OCI-LY7 (cell line): ENCODE measurements at regions of chr4 and their contacts with region 1.

Region 1: DNA sequence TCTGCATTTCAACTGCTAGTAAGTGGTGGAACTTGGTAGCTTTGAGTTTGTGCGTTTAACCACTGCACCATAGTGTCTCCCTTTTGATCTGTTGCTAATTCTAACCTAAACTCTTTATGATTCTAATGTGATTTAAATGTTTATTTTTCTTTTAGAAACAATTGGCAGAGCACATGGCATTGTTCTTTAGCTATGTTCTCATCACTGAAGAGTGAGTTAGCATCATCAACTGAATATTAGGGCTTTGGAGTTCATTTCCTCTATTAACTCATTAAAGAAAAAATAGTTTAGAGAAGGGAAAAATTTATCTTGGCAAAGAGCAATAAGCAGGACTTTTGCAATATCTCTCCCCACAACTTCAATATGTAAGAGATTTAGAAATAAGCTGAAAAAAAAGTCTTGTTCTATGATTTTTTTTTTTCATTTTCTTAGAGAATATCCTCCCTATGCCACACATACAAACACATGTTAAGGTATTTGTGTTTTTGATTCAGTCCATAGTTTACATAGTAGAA is 25.7 kb downstream of the CPEB2 start:
- DNase-seq: no peak
- H3K4me3 ChIP-seq: no peak overlapping the region
- H3K27ac ChIP-seq: no peak overlapping the region
- H3K4me1 ChIP-seq: no peaks in the 10 kb centered on the region
- CTCF ChIP-seq: no peak

Region 2: DNA sequence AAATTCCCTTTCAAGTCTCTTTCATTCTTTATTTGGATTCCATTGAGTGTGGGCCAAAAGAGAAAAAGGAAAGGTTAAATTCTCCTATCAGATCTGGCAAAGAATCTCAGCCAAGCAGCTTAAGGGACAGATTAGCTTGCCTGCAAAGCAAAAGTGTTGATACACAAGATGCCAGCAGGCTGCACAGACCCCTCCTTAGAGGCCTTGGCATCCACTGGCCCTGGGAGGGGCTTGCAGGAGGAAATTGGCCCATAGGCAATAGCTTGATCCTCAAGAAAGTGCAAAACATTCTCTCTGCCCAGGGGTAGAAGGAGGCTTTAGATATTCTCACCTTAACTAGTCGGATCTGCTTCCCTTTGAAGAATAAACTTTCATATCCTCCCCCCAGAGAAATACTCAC is 326.1 kb before region 1 on chr4:
- CTCF ChIA-PET with region 1: no interaction called
- POLR2A ChIA-PET with region 1: no interaction called
- intact Hi-C with region 1: no loop called
- DNase-seq: no peak
- H3K4me3 ChIP-seq: no peak overlapping the region
- H3K27ac ChIP-seq: no peak overlapping the region
- H3K4me1 ChIP-seq: no peaks in the 10 kb centered on the region
- CTCF ChIP-seq: no peak

Region 3: DNA sequence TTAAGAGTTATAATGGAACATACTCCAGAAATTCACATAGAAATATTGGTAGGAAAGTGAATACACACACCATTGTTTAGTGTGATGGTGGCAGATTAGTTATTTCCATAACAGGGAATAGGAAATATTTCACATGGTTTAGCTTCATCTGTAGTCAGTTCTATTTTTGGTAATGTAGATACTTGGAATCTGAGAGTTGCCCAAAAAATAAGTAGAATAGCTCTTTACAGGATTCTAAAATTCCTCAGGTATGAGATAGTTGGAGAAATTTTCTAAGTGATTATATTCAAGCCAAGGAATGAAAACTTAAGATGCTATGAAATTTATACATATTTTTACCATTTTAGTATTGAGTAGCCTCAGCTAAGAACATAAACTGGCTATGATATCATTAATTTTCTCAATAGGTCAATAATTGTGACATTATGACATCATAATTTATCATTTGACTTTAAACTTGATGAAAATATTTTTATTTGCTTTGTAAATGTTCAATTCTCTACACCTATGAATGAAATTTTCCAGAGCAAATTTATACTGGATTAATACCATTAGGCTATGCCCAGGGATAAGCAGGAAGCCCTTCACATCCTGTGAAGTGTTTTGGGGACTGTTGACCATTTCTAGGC is 10.1 kb after region 1 on chr4:
- CTCF ChIA-PET with region 1: no interaction called
- POLR2A ChIA-PET with region 1: interaction called, 12 read pairs
- intact Hi-C with region 1: no loop called
- DNase-seq: no peak
- H3K4me3 ChIP-seq: no peak overlapping the region
- H3K27ac ChIP-seq: no peak overlapping the region
- H3K4me1 ChIP-seq: no peaks in the 10 kb centered on the region
- CTCF ChIP-seq: no peak